PC-9 (cell line): ENCODE measurements at regions of chr19 and their contacts with region 1.

Region 1: DNA sequence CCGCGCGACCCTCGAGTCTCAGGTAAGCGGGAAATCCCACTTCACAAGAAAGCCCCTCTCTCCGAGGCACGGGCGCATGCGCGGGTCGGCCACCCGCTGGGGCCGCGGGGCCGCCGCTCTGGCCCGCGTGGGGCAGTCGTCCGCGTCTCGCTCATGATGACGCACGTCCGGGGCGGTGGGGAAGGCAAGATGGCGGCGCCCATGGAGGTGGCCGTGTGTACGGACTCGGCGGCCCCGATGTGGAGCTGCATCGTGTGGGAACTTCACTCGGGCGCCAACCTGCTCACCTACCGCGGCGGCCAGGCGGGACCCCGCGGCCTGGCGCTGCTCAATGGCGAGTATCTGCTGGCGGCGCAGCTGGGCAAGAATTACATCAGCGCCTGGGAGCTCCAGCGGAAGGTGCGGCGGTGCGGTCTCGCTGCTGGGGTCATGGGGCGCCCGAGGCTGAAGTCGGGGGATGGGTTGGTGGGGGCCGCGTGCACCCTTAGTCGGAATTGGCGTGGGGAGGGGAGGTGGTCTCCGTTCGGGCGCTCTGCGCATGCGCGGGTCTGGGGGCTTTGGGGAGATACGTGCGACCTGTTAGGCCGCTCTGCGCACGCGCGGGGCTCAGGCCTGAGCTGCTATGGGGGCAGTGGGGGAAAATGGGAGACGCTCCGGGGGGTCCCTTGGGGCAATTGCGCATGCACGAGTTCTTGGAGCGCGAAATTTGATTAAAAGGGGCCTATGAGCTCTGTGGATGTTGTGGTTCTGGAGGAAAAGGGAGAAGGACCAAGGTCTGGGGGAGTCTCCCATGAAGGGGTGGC is at the start of gene WDR18:
- DNase-seq: peak; percentile 57 to 84
- H3K4me3 ChIP-seq: peak within 1 kb of the TSS; percentile 99
- H3K27ac ChIP-seq: peak within 1 kb of the TSS; percentile 71
- H3K4me1 ChIP-seq: peaks cover 17% of the 10 kb centered on the region
- H3K27me3 ChIP-seq: no peaks in the 10 kb centered on the region
- CTCF ChIP-seq: no peak
- total RNA-seq, gene WDR18: 61.5 and 95.3 TPM in 2 replicates

Region 2: DNA sequence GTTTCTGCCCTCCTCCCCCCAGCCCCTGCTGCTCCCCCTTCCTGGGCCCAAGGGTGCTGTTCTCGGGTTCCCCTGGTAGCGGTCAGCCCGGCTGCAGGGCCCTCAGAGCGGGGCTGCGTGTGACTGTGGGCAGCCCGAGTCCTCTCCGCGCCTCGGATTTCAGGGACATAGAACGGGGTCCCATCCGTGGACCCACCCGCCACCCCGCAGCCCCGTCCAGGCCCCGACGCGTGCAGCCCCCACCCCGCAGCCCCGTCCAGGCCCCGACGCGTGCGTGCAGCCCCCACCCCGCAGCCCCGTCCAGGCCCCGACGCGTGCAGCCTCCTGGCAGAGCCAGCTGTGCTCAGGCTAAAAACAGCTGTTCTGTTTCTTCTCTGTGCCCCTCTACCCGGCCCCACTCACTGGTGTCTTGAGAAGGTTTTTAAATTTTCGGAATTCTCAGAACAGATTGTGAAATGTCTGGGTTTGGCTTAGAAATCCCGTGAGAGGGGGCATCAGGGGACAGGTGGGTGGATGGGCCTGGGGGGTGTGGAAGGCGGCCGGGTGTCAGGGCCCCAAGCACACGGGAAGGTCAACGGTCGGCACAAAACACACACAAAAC is 149.1 kb before region 1 on chr19:
- CTCF ChIA-PET with region 1: no interaction called
- POLR2A ChIA-PET with region 1: no interaction called
- intact Hi-C with region 1: no loop called
- DNase-seq: no peak
- H3K4me3 ChIP-seq: no peak overlapping the region
- H3K27ac ChIP-seq: no peak overlapping the region
- H3K4me1 ChIP-seq: no peaks in the 10 kb centered on the region
- H3K27me3 ChIP-seq: peaks cover 21% of the 10 kb centered on the region
- CTCF ChIP-seq: no peak

Region 3: DNA sequence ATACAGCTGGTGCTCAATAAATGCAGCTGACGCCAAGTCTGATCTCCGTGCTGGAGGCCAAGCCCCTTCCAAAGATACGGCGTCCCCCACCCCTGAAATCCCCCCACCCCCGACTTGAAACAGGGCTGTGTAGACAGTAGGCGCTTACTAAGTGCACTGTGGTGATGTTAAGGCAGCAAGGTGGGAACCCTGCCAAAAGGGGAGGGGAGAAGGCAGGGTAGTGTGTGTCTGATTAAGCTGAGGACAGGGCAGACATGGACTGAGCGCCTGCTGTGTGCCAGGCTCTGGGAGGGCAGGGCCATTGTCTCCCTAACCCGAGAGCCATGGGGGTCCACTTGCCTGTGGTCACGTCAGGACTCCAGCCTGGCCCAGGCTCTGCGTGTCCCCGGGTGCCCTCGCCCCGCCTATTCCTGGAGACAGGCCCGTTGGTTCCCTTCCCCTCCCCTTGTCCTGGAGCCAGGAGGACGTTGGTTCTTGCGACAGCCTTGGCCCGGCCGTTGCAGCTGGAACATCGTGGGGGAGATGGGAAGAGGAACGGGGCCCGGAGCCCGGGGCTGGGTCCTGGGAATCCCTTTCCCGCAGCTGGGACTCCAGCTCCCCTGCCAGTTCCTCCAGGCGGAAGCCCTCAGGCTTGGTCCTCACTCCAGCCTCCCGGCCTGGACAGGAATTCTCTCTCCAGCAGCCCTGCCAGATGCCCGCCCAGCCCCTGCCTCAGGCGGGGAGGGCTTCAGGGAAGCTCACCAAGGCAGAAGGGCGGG is 134.0 kb before region 1 on chr19:
- CTCF ChIA-PET with region 1: no interaction called
- POLR2A ChIA-PET with region 1: no interaction called
- intact Hi-C with region 1: loop called (anchors 10 kb)
- DNase-seq: peak; percentile 53 to 67
- H3K4me3 ChIP-seq: no peak overlapping the region
- H3K27ac ChIP-seq: no peak overlapping the region
- H3K4me1 ChIP-seq: peaks cover 5% of the 10 kb centered on the region; the same call in 1 of the 2 replicates
- H3K27me3 ChIP-seq: peaks cover 36% of the 10 kb centered on the region
- CTCF ChIP-seq: no peak

Region 4: GRCh38 chr19:898663-899062 is 85.7 kb before region 1 on chr19:
- CTCF ChIA-PET with region 1: interaction called, 23 read pairs
- POLR2A ChIA-PET with region 1: no interaction called
- intact Hi-C with region 1: no loop called
- DNase-seq: no peak
- H3K4me3 ChIP-seq: no peak overlapping the region
- H3K27ac ChIP-seq: no peak overlapping the region
- H3K4me1 ChIP-seq: no peaks in the 10 kb centered on the region
- H3K27me3 ChIP-seq: no peaks in the 10 kb centered on the region
- CTCF ChIP-seq: no peak

Region 5: GRCh38 chr19:925526-926322 is 58.6 kb before region 1 on chr19 and contains the start of gene ARID3A:
- CTCF ChIA-PET with region 1: interaction called, 4 read pairs
- POLR2A ChIA-PET with region 1: interaction called, 4 read pairs
- intact Hi-C with region 1: loop called (anchors 1 kb)
- DNase-seq: peak; percentile 53 to 80
- H3K4me3 ChIP-seq: peak within 1 kb of the TSS; percentile 77
- H3K27ac ChIP-seq: no peak within 1 kb of the TSS
- H3K4me1 ChIP-seq: no peaks in the 10 kb centered on the region; the same call in 1 of the 2 replicates
- H3K27me3 ChIP-seq: no peaks in the 10 kb centered on the region; the same call in 1 of the 2 replicates
- CTCF ChIP-seq: no peak
- total RNA-seq, gene ARID3A: 9.2 and 10.7 TPM in 2 replicates